ENCODE measurements at regions of chr3 and their contacts with region 1.

Region 1: DNA sequence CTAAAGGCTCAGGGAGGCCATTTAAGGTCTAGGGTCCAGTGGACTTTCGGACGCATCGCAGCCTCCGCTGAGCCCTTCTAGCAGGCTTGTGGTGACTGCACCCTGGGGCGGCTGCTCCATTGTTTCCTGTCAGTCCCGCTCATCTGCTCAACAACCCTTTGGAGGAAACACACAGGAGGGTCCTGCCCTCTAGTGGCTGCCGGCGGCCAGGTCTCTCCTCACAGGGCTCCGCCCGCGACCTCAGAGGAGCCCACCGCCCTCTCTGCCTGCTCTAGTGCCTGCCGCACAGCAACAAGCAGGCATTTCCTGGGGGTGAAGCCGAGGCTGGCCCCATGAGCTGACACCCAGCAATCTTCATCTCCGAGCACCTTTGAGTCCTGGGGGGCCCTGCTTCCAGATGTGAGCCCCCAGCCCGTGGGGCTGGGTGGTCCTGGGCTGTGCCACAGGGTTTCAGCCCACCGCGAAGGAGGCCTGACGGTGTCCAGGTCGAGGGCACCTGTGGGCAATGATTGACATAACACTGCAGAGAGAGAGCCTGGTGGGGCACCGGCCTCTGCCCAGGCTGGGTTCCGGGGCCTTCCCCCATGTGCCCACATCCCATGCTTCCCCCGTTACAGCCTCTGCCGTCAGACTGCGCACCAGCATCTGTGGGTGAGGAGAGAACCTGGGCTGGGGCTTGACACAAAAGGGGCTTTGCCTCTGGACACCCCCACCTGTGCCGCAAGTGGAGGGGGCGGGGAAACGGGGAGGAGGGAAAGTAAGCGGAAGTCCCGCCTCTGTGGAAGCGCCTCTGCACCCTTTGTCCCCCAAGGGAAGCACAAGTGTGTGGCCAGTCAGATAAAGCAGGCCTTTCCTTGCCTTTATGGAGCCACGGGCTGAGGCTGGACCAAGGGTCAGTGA is 27.0 kb upstream of the SFMBT1 start:
- DNase-seq: peak; percentile 81 to 91 (median 86)
- ATAC-seq: peak; percentile 92
- H3K4me3 ChIP-seq: peak overlapping the region; percentile 68
- H3K4me3 Mint-ChIP-seq: peak overlapping the region; percentile 95
- H3K27ac ChIP-seq: peak overlapping the region; percentile 73 to 86
- H3K27ac Mint-ChIP-seq: peak overlapping the region; percentile 96
- H3K4me1 ChIP-seq: peaks cover 25% of the 10 kb centered on the region
- H3K4me1 Mint-ChIP-seq: peaks cover 24% of the 10 kb centered on the region
- H3K27me3 ChIP-seq: no peaks in the 10 kb centered on the region
- H3K27me3 Mint-ChIP-seq: no peaks in the 10 kb centered on the region
- CTCF ChIP-seq: peak; percentile 88

Region 2: DNA sequence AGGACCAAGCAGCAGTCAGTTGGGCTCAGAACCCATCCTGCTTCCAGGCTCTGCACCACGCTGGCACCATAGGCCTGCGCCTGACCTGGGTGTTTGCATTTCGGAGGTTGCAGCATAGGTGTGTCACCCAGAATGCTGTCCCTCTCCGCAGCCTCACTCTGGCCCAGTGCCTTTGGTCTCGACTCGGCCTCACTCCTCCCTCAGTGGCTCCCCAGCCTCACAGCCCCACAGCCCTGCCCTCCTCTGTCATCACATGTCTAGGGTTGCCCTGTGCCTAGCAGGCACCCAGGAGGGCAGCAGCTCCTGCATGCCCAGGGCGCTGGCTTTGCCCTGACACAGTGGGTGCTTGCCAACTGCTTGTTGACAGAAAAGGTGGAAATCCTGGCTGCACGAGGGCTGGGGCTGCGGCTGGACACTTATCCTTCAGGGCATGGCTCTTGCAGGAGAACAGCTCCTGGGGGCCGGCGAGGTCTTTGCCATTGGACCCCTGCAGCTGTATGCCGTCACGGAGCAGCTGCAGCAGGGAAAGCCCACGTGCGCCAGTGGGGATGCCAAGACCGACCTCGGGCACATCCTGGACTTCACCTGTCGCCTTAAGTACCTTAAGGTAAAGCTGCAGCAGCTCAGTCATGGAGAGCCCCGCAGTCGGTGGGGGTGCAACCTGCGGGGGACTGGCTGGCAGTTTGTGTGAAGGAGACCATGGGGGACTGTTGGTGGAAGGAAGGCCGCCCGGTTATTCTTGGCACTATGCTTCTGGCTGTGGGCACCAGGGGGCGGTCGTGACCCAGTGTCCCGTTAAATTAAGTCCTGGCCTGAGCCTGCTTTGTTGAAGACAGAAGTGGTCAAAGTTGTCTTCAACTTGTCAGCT is 601.3 kb before region 1 on chr3:
- CTCF ChIA-PET with region 1: no interaction called
- POLR2A ChIA-PET with region 1: no interaction called
- intact Hi-C with region 1: loop called in 1 of 2 experiments (anchors 5 kb)
- DNase-seq: peak in 4 of 14 experiments; percentile 15 to 54 (median 32)
- ATAC-seq: peak; percentile 48
- H3K4me3 ChIP-seq: no peak overlapping the region
- H3K4me3 Mint-ChIP-seq: no peak overlapping the region
- H3K27ac ChIP-seq: no peak overlapping the region
- H3K27ac Mint-ChIP-seq: no peak overlapping the region
- H3K4me1 ChIP-seq: no peaks in the 10 kb centered on the region
- H3K4me1 Mint-ChIP-seq: peaks cover 5% of the 10 kb centered on the region
- H3K27me3 ChIP-seq: no peaks in the 10 kb centered on the region
- H3K27me3 Mint-ChIP-seq: no peaks in the 10 kb centered on the region
- CTCF ChIP-seq: peak; percentile 52

Region 3: GRCh38 chr3:52770496-52771333 is 302.2 kb before region 1 on chr3 and contains the start of gene NEK4:
- CTCF ChIA-PET with region 1: no interaction called
- POLR2A ChIA-PET with region 1: no interaction called
- intact Hi-C with region 1: no loop called
- DNase-seq: peak; percentile 53 to 93 (median 81)
- ATAC-seq: peak; percentile 80
- H3K4me3 ChIP-seq: peak within 1 kb of the TSS; percentile 83
- H3K4me3 Mint-ChIP-seq: peak within 1 kb of the TSS; percentile 96
- H3K27ac ChIP-seq: peak within 1 kb of the TSS; percentile 63 to 72
- H3K27ac Mint-ChIP-seq: peak within 1 kb of the TSS; percentile 79
- H3K4me1 ChIP-seq: peaks cover 14% of the 10 kb centered on the region
- H3K4me1 Mint-ChIP-seq: peaks cover 17% of the 10 kb centered on the region
- H3K27me3 ChIP-seq: no peaks in the 10 kb centered on the region
- H3K27me3 Mint-ChIP-seq: no peaks in the 10 kb centered on the region
- CTCF ChIP-seq: no peak
- total RNA-seq, gene NEK4: 6.1 to 6.9 TPM

Region 4: GRCh38 chr3:52844290-52844975 is 228.5 kb before region 1 on chr3:
- CTCF ChIA-PET with region 1: no interaction called
- POLR2A ChIA-PET with region 1: no interaction called
- intact Hi-C with region 1: loop called in 1 of 2 experiments (anchors 1 kb)
- DNase-seq: no peak
- ATAC-seq: no peak
- H3K4me3 ChIP-seq: no peak overlapping the region
- H3K4me3 Mint-ChIP-seq: no peak overlapping the region
- H3K27ac ChIP-seq: no peak overlapping the region
- H3K27ac Mint-ChIP-seq: peak overlapping the region; percentile 60
- H3K4me1 ChIP-seq: peaks cover 1% of the 10 kb centered on the region
- H3K4me1 Mint-ChIP-seq: peaks cover 14% of the 10 kb centered on the region
- H3K27me3 ChIP-seq: no peaks in the 10 kb centered on the region
- H3K27me3 Mint-ChIP-seq: no peaks in the 10 kb centered on the region
- CTCF ChIP-seq: no peak

Region 5: GRCh38 chr3:52907497-52907896 is 165.4 kb before region 1 on chr3:
- CTCF ChIA-PET with region 1: no interaction called
- POLR2A ChIA-PET with region 1: no interaction called
- intact Hi-C with region 1: loop called (anchors 1 to 5 kb)
- DNase-seq: no peak
- ATAC-seq: no peak
- H3K4me3 ChIP-seq: no peak overlapping the region
- H3K4me3 Mint-ChIP-seq: no peak overlapping the region
- H3K27ac ChIP-seq: no peak overlapping the region
- H3K27ac Mint-ChIP-seq: peak overlapping the region; percentile 28
- H3K4me1 ChIP-seq: no peaks in the 10 kb centered on the region
- H3K4me1 Mint-ChIP-seq: no peaks in the 10 kb centered on the region
- H3K27me3 ChIP-seq: no peaks in the 10 kb centered on the region
- H3K27me3 Mint-ChIP-seq: no peaks in the 10 kb centered on the region
- CTCF ChIP-seq: no peak

Region 6: DNA sequence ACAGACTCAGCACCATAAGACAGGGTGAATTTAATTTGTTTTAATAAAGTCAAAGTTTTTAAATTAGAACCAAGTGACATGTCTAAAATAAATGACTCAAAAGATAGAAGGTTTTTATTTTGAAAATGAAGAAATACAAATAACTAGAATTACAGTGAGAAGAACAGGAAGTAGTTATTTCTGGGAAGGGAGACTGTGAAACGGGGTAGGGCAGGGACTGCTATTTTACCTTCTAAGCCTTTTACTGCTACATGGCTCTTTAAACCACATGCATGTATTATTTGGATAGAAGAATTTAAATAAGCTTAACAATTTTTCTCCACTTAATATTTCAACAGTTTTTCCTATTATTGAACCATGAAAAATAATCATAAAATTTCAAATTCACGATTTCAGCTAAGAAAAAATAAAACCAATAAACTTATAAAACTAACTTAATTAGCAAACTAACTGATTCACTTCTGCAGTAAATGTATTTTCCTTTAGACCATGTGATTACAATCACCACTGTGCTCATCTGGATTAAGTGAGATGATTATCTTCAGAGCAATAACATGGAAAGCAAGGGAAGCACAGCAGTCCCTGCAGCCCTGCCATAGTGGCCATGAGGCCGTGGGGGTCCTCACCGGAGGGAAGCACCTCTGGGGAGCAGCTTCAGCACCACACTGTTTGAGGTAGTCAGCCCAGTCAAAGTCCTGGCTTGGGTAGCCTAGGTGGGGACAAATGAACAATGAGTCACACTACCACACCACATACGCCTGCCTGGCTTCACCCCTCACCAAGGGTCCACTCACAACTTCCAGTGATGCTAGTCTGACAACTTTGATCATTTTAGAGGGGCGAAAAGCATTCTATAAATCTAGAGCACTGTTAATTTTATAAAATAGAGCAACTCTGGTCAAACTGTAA is 147.2 kb before region 1 on chr3:
- CTCF ChIA-PET with region 1: no interaction called
- POLR2A ChIA-PET with region 1: no interaction called
- intact Hi-C with region 1: no loop called
- DNase-seq: no peak
- ATAC-seq: no peak
- H3K4me3 ChIP-seq: no peak overlapping the region
- H3K4me3 Mint-ChIP-seq: no peak overlapping the region
- H3K27ac ChIP-seq: no peak overlapping the region
- H3K27ac Mint-ChIP-seq: no peak overlapping the region
- H3K4me1 ChIP-seq: no peaks in the 10 kb centered on the region
- H3K4me1 Mint-ChIP-seq: no peaks in the 10 kb centered on the region
- H3K27me3 ChIP-seq: no peaks in the 10 kb centered on the region
- H3K27me3 Mint-ChIP-seq: no peaks in the 10 kb centered on the region
- CTCF ChIP-seq: no peak

Region 7: GRCh38 chr3:53030619-53031449 is 42.1 kb before region 1 on chr3:
- CTCF ChIA-PET with region 1: no interaction called
- POLR2A ChIA-PET with region 1: no interaction called
- intact Hi-C with region 1: loop called in 1 of 2 experiments (anchors 5 kb)
- DNase-seq: peak; percentile 33 to 74 (median 53)
- ATAC-seq: peak; percentile 94
- H3K4me3 ChIP-seq: no peak overlapping the region
- H3K4me3 Mint-ChIP-seq: peak overlapping the region; percentile 53
- H3K27ac ChIP-seq: no peak overlapping the region
- H3K27ac Mint-ChIP-seq: peak overlapping the region; percentile 88
- H3K4me1 ChIP-seq: peaks cover 36% of the 10 kb centered on the region
- H3K4me1 Mint-ChIP-seq: peaks cover 65% of the 10 kb centered on the region
- H3K27me3 ChIP-seq: no peaks in the 10 kb centered on the region
- H3K27me3 Mint-ChIP-seq: no peaks in the 10 kb centered on the region
- CTCF ChIP-seq: no peak

Region 8: GRCh38 chr3:53274938-53275605 is 202.2 kb after region 1 on chr3:
- CTCF ChIA-PET with region 1: no interaction called
- POLR2A ChIA-PET with region 1: no interaction called
- intact Hi-C with region 1: no loop called
- DNase-seq: peak in 7 of 14 experiments; percentile 10 to 33 (median 24)
- ATAC-seq: peak; percentile 95
- H3K4me3 ChIP-seq: no peak overlapping the region
- H3K4me3 Mint-ChIP-seq: peak overlapping the region; percentile 52
- H3K27ac ChIP-seq: no peak overlapping the region
- H3K27ac Mint-ChIP-seq: peak overlapping the region; percentile 82
- H3K4me1 ChIP-seq: no peaks in the 10 kb centered on the region
- H3K4me1 Mint-ChIP-seq: peaks cover 9% of the 10 kb centered on the region
- H3K27me3 ChIP-seq: no peaks in the 10 kb centered on the region
- H3K27me3 Mint-ChIP-seq: no peaks in the 10 kb centered on the region
- CTCF ChIP-seq: no peak

Measured in CD4-positive, alpha-beta T cell (primary cell).